ENCODE measurements at regions of chr7 and their contacts with region 1.

Region 1: DNA sequence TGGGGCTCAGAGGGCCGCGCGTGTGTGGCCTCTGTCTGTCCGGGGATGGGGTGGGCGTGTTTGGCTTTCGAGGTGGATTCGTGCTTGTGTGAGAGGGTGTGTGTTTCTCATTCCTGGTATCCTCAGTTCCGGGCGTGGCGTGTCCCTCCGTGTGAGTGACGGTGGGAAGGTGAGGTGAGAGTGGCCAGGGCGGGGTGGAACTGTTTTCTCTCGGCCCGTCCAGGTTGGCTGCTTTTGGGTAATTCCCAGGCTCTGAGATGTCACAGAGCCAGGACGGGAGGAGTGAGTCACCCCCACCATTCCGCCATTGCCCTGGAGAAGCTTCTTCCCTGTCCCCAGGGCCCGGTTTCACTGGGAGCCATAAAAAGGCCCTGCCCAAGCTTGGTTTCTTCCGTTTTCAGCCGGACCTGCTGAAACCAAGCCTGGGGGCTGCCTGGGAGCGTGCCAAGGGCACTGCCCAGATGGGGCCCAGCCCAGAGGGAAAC is 21.3 kb upstream of the CLDN4 start:
- DNase-seq: peak; percentile 41
- ATAC-seq: no peak

Region 2: GRCh38 chr7:73373741-73374140 is 435.8 kb before region 1 on chr7:
- intact Hi-C with region 1: loop called (anchors 5 kb)
- DNase-seq: no peak
- ATAC-seq: no peak

Region 3: DNA sequence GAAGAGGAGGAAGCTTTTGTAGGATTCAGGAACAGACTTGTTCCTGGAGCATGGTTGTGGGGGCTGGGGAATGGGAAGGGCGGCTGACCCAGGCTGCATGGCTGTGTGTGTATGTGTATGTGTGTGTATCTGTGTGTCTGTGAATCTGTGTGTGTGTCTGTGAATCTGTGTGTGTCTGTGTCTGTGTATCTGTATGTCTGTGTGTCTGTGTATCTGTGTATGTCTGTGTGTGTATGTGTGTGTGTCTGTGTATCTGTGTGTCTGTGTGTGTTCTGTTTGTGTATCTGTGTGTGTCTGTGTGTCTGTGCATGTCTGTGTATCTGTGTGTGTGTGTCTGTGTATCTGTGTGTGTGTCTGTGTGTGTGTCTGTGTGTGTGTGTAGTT is 83.4 kb before region 1 on chr7:
- intact Hi-C with region 1: no loop called
- DNase-seq: no peak
- ATAC-seq: no peak

Measured in sciatic nerve (tissue), 2 donors.